HEK293 (cell line): ENCODE measurements at regions of chr10 and their contacts with region 1.

Region 1: DNA sequence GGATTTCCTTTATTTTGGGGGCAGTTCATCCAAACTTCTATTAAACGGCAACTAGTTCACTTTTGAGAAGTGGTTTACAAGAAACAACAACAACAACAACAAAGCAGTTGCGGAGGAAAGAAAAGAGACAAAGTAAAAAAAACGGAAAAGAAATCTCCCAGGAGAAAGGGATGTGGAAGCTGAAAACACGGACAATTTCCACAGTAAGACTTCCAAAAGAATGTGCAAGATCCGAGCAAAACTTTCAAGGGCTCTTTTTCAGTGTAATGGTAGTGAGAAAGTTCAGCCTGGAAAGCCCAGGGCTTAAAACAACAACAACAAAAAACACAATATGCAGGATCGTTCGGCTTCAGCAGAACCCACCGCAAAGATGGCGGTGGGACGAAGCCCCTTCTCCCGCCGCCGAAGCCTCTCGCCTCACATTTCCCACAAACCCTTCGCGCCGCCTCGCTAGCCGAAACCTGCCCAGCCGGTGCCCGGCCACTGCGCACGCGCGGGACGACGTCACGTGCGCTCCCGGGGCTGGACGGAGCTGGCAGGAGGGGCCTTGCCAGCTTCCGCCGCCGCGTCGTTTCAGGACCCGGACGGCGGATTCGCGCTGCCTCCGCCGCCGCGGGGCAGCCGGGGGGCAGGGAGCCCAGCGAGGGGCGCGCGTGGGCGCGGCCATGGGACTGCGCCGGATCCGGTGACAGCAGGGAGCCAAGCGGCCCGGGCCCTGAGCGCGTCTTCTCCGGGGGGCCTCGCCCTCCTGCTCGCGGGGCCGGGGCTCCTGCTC is at the start of gene TNKS2:
- H3K4me3 ChIP-seq: peak within 1 kb of the TSS; percentile 96
- H3K27ac ChIP-seq: peak within 1 kb of the TSS; percentile 97
- H3K4me1 ChIP-seq: peaks cover 7% of the 10 kb centered on the region; the same call in 1 of the 2 replicates
- CTCF ChIP-seq: no peak

Region 2: DNA sequence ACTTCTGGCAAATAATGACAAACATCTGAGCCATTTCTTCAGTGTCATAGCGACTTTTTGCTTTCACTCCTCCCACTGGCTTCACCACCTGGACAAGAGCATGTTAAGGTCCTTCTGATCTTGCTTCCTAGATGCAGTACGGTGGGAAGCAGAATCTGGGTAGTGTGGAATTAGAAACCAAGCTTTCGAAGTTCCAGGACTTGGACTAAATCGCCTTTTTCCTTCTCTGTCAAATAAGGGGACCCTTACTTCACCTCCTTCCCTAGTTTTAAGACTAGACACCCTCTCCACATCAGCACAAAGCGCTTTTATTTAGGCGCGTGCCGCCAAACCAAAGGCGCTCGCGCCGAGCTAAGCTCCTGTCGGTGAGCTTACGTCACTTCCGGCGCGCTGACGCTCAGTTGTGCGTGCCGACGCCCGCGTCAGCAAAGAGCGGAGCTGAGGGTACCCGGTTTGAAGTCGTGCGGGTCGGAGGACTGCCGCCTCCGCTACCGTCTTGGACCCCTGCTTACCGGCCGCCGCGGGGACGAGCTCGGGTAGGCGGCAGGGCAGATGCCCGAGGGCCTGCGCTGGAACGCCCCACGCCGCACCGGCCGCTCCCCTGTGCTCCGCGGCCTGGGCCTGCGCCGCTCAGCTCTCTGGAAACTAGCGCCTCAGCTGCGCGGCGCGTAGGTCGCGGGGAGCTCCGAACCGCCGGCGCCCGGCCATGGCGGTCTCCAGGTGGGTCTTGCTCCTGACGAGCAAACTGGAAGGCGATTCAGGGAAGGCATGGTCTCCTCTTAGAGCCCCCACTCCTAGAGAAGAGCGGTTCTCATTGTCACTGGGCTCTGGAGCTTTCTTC is 125.5 kb after region 1 on chr10 and contains the start of gene BTAF1:
- CTCF ChIA-PET with region 1: no interaction called
- POLR2A ChIA-PET with region 1: interaction called, 14 read pairs
- H3K4me3 ChIP-seq: peak within 1 kb of the TSS; percentile 85
- H3K27ac ChIP-seq: peak within 1 kb of the TSS; percentile 88
- H3K4me1 ChIP-seq: peaks cover 3% of the 10 kb centered on the region
- CTCF ChIP-seq: no peak